ENCODE measurements at regions of chr9 and their contacts with region 1.

Region 1: DNA sequence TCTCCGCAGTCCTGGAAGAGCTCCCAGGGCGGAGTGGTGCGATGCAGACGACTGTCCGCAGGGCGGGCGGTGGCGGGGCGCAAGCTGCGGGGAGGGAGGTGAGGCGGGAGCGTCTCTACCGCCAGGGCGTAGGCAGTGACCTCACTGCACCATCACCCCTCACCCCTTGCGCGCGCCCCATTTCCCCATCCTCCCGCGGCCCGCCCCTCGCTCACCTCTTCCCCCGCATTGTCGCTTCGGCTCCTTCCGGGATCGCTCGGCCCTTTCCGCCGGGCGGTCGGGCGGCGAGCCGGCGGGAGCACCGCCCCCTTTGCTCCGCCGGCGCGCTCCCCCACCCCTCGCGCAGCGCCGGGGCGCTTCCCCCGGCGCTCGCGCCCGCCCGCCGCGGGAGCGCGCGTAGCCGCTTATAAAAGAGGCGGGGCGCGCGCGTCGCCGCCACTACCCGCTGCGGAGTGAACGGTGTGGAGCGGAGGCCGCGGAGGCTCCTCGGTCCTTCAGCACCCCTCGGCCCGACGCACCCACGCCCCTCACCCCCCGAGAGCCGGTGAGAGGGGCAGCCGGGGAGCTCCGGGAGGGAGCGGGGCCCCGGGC is at the start of gene SPTAN1:
- DNase-seq: peak; percentile 89 to 97 (median 96)
- ATAC-seq: peak; percentile 82
- H3K4me3 ChIP-seq: peak within 1 kb of the TSS; percentile 84
- H3K4me3 Mint-ChIP-seq: peak within 1 kb of the TSS; percentile 96
- H3K27ac ChIP-seq: peak within 1 kb of the TSS; percentile 90
- H3K27ac Mint-ChIP-seq: peak within 1 kb of the TSS; percentile 99
- H3K4me1 ChIP-seq: peaks cover 51% of the 10 kb centered on the region
- H3K4me1 Mint-ChIP-seq: peaks cover 25% of the 10 kb centered on the region
- H3K27me3 ChIP-seq: no peaks in the 10 kb centered on the region
- H3K27me3 Mint-ChIP-seq: no peaks in the 10 kb centered on the region
- CTCF ChIP-seq: no peak
- total RNA-seq, gene SPTAN1: 386 to 392 TPM

Region 2: DNA sequence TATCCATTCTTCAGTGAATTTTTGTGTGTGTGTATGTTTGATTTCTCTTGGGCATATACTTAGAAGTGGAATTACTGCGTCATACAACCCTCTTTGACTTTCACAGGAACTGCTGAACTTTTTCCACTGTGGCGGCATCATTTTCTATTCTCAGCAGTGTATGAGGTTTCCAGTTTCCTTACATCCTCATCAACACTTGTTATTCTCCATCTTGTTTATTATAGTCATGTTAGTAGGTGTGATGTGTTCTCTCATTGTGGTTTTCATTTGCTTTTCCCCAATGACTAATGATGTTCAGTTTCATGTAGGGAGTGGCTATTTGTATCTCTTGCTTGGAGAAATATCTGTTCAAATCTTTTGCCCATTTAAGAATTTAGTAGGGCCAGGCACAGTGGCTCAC is 1125.5 kb before region 1 on chr9:
- CTCF ChIA-PET with region 1: no interaction called
- POLR2A ChIA-PET with region 1: no interaction called
- intact Hi-C with region 1: no loop called
- DNase-seq: peak in 2 of 14 experiments; percentile 11 to 29
- ATAC-seq: no peak
- H3K4me3 ChIP-seq: no peak overlapping the region
- H3K4me3 Mint-ChIP-seq: peak overlapping the region; percentile 73
- H3K27ac ChIP-seq: no peak overlapping the region
- H3K27ac Mint-ChIP-seq: no peak overlapping the region
- H3K4me1 ChIP-seq: peaks cover 31% of the 10 kb centered on the region
- H3K4me1 Mint-ChIP-seq: peaks cover 55% of the 10 kb centered on the region
- H3K27me3 ChIP-seq: no peaks in the 10 kb centered on the region
- H3K27me3 Mint-ChIP-seq: no peaks in the 10 kb centered on the region
- CTCF ChIP-seq: no peak

Region 3: DNA sequence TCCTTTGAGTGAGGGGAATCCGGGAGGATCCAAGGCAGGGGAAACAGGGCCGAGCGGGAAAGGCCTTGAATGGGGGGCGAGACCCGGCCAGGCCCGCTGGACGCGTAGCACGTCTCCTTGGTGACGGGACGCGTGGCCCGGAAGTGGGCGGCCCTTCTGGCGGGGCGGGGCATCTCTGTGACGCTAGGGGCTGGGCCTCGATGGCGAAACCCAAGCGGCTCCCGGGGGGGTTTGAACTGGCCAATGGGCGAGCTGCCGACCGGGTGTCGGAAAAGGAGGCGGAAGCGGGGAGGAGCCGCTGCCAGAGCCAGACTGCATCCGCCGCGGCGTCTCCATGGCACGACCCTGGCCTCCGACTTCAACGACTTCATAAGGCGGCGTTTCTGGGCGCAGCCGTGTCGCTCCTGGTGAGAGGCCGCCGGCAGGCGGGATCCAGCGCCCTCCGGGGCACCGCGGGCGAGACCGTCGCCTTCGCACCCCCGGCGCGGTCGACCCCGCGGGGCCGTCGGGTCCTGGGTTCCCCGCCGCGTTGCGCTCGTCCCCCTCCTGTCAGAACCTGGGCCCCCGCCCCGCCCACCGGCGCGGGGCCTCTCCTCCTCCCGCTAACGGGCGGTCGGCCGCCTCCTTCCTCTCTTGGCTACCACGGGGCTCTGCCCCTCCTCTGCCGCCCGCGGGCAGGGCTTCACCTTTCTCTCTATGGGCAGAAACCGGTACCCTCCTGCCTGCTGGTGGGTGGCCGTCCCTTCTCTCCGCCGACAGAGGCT is 96.2 kb before region 1 on chr9 and contains the start of gene ODF2:
- CTCF ChIA-PET with region 1: no interaction called
- POLR2A ChIA-PET with region 1: interaction called, 5 read pairs
- intact Hi-C with region 1: loop called in 1 of 2 experiments (anchors 5 kb)
- DNase-seq: peak; percentile 97 to 99 (median 98)
- ATAC-seq: peak; percentile 90
- H3K4me3 ChIP-seq: peak within 1 kb of the TSS; percentile 91
- H3K4me3 Mint-ChIP-seq: peak within 1 kb of the TSS; percentile 91
- H3K27ac ChIP-seq: peak within 1 kb of the TSS; percentile 83 to 86
- H3K27ac Mint-ChIP-seq: peak within 1 kb of the TSS; percentile 89
- H3K4me1 ChIP-seq: peaks cover 19% of the 10 kb centered on the region
- H3K4me1 Mint-ChIP-seq: peaks cover 11% of the 10 kb centered on the region
- H3K27me3 ChIP-seq: no peaks in the 10 kb centered on the region
- H3K27me3 Mint-ChIP-seq: no peaks in the 10 kb centered on the region
- CTCF ChIP-seq: no peak
- total RNA-seq, gene ODF2: 18.3 to 21.3 TPM

Region 4: GRCh38 chr9:128540634-128541360 is 11.5 kb before region 1 on chr9:
- CTCF ChIA-PET with region 1: no interaction called
- POLR2A ChIA-PET with region 1: interaction called, 20 read pairs
- intact Hi-C with region 1: no loop called
- DNase-seq: no peak
- ATAC-seq: no peak
- H3K4me3 ChIP-seq: no peak overlapping the region
- H3K4me3 Mint-ChIP-seq: no peak overlapping the region
- H3K27ac ChIP-seq: no peak overlapping the region
- H3K27ac Mint-ChIP-seq: peak overlapping the region; percentile 31
- H3K4me1 ChIP-seq: no peaks in the 10 kb centered on the region
- H3K4me1 Mint-ChIP-seq: no peaks in the 10 kb centered on the region
- H3K27me3 ChIP-seq: no peaks in the 10 kb centered on the region
- H3K27me3 Mint-ChIP-seq: no peaks in the 10 kb centered on the region
- CTCF ChIP-seq: no peak

Region 5: DNA sequence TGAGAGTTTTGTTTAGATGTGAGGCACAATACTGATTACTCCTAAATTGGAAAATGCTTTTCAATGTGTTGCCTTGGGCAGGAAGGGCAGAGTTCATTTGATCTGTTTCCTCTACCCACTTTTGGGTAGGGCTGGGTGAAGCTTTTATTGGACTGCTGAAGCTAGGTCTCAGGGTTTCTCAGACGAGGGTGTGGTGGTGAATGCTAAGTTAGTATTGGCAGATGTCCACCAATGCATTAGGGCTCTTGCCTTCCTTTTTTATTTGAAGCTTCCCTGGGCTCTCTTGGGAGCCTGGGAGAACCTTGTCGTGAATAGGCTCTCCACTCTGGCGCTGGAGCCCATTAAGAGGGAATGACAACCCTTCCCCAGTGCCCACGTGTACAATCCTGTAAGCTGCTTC is 23.2 kb after region 1 on chr9:
- CTCF ChIA-PET with region 1: no interaction called
- POLR2A ChIA-PET with region 1: interaction called, 13 read pairs
- intact Hi-C with region 1: no loop called
- DNase-seq: no peak
- ATAC-seq: no peak
- H3K4me3 ChIP-seq: no peak overlapping the region
- H3K4me3 Mint-ChIP-seq: no peak overlapping the region
- H3K27ac ChIP-seq: no peak overlapping the region
- H3K27ac Mint-ChIP-seq: no peak overlapping the region
- H3K4me1 ChIP-seq: peaks cover 3% of the 10 kb centered on the region
- H3K4me1 Mint-ChIP-seq: peaks cover 16% of the 10 kb centered on the region
- H3K27me3 ChIP-seq: no peaks in the 10 kb centered on the region
- H3K27me3 Mint-ChIP-seq: no peaks in the 10 kb centered on the region
- CTCF ChIP-seq: no peak

Region 6: GRCh38 chr9:128723866-128724743 is 171.9 kb after region 1 on chr9 and contains the start of gene ZDHHC12:
- CTCF ChIA-PET with region 1: no interaction called
- POLR2A ChIA-PET with region 1: interaction called, 18 read pairs
- intact Hi-C with region 1: no loop called
- DNase-seq: peak; percentile 97 to 100 (median 99)
- ATAC-seq: peak; percentile 96
- H3K4me3 ChIP-seq: peak within 1 kb of the TSS; percentile 90
- H3K4me3 Mint-ChIP-seq: peak within 1 kb of the TSS; percentile 95
- H3K27ac ChIP-seq: peak within 1 kb of the TSS; percentile 70 to 72
- H3K27ac Mint-ChIP-seq: peak within 1 kb of the TSS; percentile 86
- H3K4me1 ChIP-seq: peaks cover 53% of the 10 kb centered on the region
- H3K4me1 Mint-ChIP-seq: peaks cover 33% of the 10 kb centered on the region
- H3K27me3 ChIP-seq: no peaks in the 10 kb centered on the region
- H3K27me3 Mint-ChIP-seq: no peaks in the 10 kb centered on the region
- CTCF ChIP-seq: no peak
- total RNA-seq, gene ZDHHC12: 22.0 to 23.7 TPM

Region 7: DNA sequence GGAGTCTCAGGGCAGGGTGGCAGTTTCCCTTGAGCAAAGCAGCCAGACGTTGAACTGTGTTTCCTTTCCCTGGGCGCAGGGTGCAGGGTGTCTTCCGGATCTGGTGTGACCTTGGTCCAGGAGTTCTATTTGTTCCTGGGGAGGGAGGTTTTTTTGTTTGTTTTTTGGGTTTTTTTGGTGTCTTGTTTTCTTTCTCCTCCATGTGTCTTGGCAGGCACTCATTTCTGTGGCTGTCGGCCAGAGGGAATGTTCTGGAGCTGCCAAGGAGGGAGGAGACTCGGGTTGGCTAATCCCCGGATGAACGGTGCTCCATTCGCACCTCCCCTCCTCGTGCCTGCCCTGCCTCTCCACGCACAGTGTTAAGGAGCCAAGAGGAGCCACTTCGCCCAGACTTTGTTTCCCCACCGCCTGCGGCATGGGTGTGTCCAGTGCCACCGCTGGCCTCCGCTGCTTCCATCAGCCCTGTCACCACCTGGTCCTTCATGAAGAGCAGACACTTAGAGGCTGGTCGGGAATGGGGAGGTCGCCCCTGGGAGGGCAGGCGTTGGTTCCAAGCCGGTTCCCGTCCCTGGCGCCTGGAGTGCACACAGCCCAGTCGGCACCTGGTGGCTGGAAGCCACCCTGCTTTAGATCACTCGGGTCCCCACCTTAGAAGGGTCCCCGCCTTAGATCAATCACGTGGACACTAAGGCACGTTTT is 365.1 kb after region 1 on chr9:
- CTCF ChIA-PET with region 1: no interaction called
- POLR2A ChIA-PET with region 1: no interaction called
- intact Hi-C with region 1: no loop called
- DNase-seq: no peak
- ATAC-seq: no peak
- H3K4me3 ChIP-seq: no peak overlapping the region
- H3K4me3 Mint-ChIP-seq: no peak overlapping the region
- H3K27ac ChIP-seq: no peak overlapping the region
- H3K27ac Mint-ChIP-seq: no peak overlapping the region
- H3K4me1 ChIP-seq: peaks cover 29% of the 10 kb centered on the region
- H3K4me1 Mint-ChIP-seq: peaks cover 18% of the 10 kb centered on the region
- H3K27me3 ChIP-seq: no peaks in the 10 kb centered on the region
- H3K27me3 Mint-ChIP-seq: no peaks in the 10 kb centered on the region
- CTCF ChIP-seq: no peak

Region 8: GRCh38 chr9:129068990-129069861 is 517.0 kb after region 1 on chr9:
- CTCF ChIA-PET with region 1: no interaction called
- POLR2A ChIA-PET with region 1: no interaction called
- intact Hi-C with region 1: no loop called
- DNase-seq: peak; percentile 21 to 84 (median 53)
- ATAC-seq: peak; percentile 90
- H3K4me3 ChIP-seq: no peak overlapping the region
- H3K4me3 Mint-ChIP-seq: peak overlapping the region; percentile 74
- H3K27ac ChIP-seq: peak overlapping the region; percentile 9 to 52
- H3K27ac Mint-ChIP-seq: peak overlapping the region; percentile 88
- H3K4me1 ChIP-seq: peaks cover 63% of the 10 kb centered on the region
- H3K4me1 Mint-ChIP-seq: peaks cover 35% of the 10 kb centered on the region
- H3K27me3 ChIP-seq: no peaks in the 10 kb centered on the region
- H3K27me3 Mint-ChIP-seq: no peaks in the 10 kb centered on the region
- CTCF ChIP-seq: no peak

Measured in CD4-positive, alpha-beta T cell (primary cell).